ENCODE measurements at regions of chr3 and their contacts with region 1.

Region 1: GRCh38 chr3:113626503-113627371 is 69.7 kb downstream of the USF3 start:
- DNase-seq: peak in 3 of 5 donors; percentile 44 to 74 (median 63)
- H3K4me3 ChIP-seq: peak overlapping the region in 2 of 3 donors; percentile 40 to 51
- H3K27ac ChIP-seq: no peak overlapping the region
- H3K4me1 ChIP-seq: peaks cover 0 to 3% (median 0%) of the 10 kb centered on the region in 3 donors
- H3K27me3 ChIP-seq: no peaks in the 10 kb centered on the region
- CTCF ChIP-seq: peak; percentile 91

Region 2: GRCh38 chr3:113450911-113451310 is 175.8 kb before region 1 on chr3:
- intact Hi-C with region 1: no loop called
- DNase-seq: no peak
- H3K4me3 ChIP-seq: no peak overlapping the region
- H3K27ac ChIP-seq: no peak overlapping the region
- H3K4me1 ChIP-seq: no peaks in the 10 kb centered on the region
- H3K27me3 ChIP-seq: no peaks in the 10 kb centered on the region
- CTCF ChIP-seq: no peak

Region 3: DNA sequence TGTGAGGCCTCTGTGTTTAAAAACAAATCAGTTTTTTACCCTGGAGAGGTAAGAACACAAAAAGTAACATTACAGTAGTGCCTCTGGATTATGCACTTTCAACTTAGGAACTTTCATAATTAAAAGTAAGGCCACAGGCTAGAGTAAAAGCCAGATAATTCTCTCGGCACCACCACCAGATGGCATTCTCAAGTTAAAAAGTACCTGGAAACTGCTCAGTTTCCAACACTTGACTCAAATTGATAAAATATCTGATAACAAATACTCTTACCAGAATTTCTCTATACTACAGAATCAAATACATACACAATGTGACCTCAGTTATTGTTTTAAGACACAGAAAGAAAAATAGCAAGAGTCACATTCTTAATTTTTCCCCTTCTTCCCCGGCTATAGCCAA is 131.7 kb before region 1 on chr3:
- intact Hi-C with region 1: loop called (anchors 10 kb)
- DNase-seq: peak in 3 of 5 donors; percentile 26 to 66 (median 53)
- H3K4me3 ChIP-seq: no peak overlapping the region
- H3K27ac ChIP-seq: no peak overlapping the region
- H3K4me1 ChIP-seq: no peaks in the 10 kb centered on the region
- H3K27me3 ChIP-seq: no peaks in the 10 kb centered on the region
- CTCF ChIP-seq: peak; percentile 56